Right ventricle myocardium inferior (tissue), 1 donor: ENCODE measurements at regions of chr7 and their contacts with region 1.

Region 1: DNA sequence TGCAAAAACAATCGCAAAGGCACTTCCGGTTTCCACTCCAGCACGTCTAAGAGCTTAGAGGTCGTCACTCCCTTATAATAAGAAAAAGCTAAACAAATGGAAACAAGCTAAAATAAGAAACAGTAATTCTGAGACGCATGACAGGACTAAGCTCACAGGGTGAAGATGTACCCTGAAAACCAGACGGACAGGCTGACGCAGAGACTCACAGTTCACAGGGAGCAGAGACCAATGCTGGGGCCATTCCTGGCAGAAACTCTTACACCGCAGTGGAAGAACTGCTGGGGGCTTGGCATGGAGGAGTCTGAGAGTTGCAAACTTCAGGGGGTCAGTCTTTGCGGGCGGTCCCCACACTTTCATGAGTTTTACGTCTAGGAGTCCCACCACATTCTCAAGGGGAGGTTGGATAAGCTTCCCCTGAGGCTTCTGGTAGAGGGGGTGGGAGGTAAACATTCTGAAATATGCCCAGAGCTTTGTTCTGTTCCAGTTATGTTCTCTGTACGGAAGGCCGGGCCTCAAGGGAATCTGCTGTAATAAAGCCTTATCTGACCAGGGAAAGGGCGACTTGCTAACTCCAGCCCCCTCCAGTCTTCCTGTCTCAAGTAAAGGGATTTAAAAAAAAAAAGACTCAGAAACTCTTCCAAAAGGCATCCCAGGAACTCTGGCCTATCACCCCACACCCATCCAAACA is 47.8 kb downstream of the BRI3 start:
- DNase-seq: no peak
- ATAC-seq: peak; percentile 70

Region 2: GRCh38 chr7:98365863-98366561 is 36.8 kb after region 1 on chr7:
- intact Hi-C with region 1: loop called (anchors 5 kb)
- DNase-seq: no peak
- ATAC-seq: peak; percentile 48